H1 (cell line): ENCODE measurements at regions of chr11 and their contacts with region 1.

Region 1: DNA sequence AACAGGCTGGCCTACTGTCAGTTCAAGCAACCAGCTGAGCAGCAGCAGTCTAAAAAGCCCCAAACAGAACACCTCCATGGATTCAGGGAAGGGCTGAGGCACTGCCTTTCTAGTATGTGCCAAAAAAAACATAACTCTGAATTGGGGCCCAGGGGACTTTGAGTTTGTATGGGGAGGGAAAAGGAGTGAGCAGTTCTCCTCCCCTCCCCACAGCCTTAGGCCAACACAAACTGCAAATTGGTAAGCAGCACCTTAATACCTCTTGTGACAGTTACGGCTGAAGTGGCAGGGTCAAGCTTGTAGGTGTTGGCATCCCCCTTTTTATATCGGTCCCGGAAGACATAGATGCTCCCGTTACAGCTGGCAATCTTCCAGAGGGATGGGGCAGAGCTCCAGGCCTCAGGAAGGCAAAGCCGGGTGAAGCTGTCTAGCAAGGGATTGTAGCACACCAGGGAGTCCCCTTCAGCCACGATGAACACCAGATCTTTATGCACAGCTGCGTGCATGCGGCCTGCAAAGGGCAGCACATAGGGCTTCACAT is 6.0 kb downstream of the KBTBD4 start:
- DNase-seq: no peak
- H3K4me3 ChIP-seq: no peak overlapping the region
- H3K27ac ChIP-seq: no peak overlapping the region
- H3K4me1 ChIP-seq: peaks cover 0 to 2% (median under 1%) of the 10 kb centered on the region in 4 experiments; a peak in 2 of 7 replicates
- H3K27me3 ChIP-seq: no peaks in the 10 kb centered on the region
- CTCF ChIP-seq: no peak
- EP300 ChIP-seq: no peak
- POLR2A ChIP-seq: no peak
- RAD21 ChIP-seq: no peak

Region 2: DNA sequence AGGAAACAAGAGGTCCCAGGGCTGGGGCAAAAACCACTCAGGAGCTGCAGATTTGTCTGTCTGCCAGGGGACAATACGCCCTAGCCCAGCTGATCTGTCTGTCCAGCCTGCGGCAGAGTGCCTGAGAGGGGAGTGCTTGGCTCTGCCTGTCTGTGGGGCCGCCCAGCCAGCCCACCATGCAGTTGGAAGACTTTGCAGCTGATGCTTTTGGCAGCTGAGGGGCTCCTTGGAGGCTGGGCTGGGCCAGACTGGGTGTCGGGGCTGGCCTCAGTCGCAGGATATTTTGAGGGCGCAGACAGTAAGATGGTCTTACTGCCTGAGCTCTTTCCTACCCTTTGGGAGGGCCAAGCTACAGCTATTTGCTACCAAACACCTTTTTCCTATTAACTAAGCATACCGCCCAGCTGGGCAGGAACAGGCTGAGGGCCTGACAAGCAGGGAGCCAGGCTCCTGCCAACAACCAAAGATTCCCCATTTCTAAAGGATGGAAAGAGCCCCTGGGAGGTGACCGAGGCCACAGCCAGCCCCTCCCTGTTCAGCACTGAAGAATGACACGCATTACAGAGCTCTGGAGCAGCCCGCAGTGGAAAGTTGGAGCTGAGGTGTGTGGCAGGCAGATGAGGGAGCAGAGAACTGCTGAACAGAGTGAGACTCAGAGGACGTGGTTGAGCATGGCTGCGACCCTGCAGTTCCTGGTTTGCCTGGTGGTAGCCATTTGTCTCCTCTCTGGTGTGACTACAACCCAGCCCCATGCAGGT is 13.5 kb after region 1 on chr11 and contains the start of gene FAM180B:
- CTCF ChIA-PET with region 1: interaction called, 3 read pairs
- POLR2A ChIA-PET with region 1: interaction called, 42 read pairs
- DNase-seq: no peak
- H3K4me3 ChIP-seq: no peak within 1 kb of the TSS
- H3K27ac ChIP-seq: no peak within 1 kb of the TSS
- H3K4me1 ChIP-seq: no peaks in the 10 kb centered on the region; a peak in 1 of 7 replicates
- H3K27me3 ChIP-seq: no peaks in the 10 kb centered on the region
- CTCF ChIP-seq: no peak
- EP300 ChIP-seq: no peak
- POLR2A ChIP-seq: no peak
- RAD21 ChIP-seq: no peak
- total RNA-seq, gene FAM180B: not detected in 2 replicates